Activated naive CD4-positive, alpha-beta T cell treated with anti-CD3 and anti-CD28 coated beads for 36 hours (primary cell): ENCODE measurements at regions of chr16 and their contacts with region 1.

Region 1: GRCh38 chr16:11742539-11743307 is at the start of gene TXNDC11:
- DNase-seq: peak; percentile 99
- H3K4me3 Mint-ChIP-seq: peak within 1 kb of the TSS; percentile 91
- H3K27ac Mint-ChIP-seq: peak within 1 kb of the TSS; percentile 96
- H3K4me1 Mint-ChIP-seq: peaks cover 48% of the 10 kb centered on the region
- H3K27me3 Mint-ChIP-seq: no peaks in the 10 kb centered on the region
- total RNA-seq, gene TXNDC11: 24.6 to 25.5 TPM

Region 2: GRCh38 chr16:11667824-11668622 is 74.7 kb before region 1 on chr16 and contains the start of gene SNN:
- CTCF ChIA-PET with region 1: interaction called, 3 read pairs
- intact Hi-C with region 1: loop called (anchors 2 kb)
- DNase-seq: peak; percentile 89
- H3K4me3 Mint-ChIP-seq: peak within 1 kb of the TSS; percentile 72
- H3K27ac Mint-ChIP-seq: no peak within 1 kb of the TSS
- H3K4me1 Mint-ChIP-seq: peaks cover 71% of the 10 kb centered on the region
- H3K27me3 Mint-ChIP-seq: no peaks in the 10 kb centered on the region
- total RNA-seq, gene SNN: 12.0 to 13.6 TPM

Region 3: GRCh38 chr16:11698271-11698689 is 44.4 kb before region 1 on chr16:
- CTCF ChIA-PET with region 1: interaction called, 5 read pairs
- intact Hi-C with region 1: loop called (anchors 1 kb)
- DNase-seq: peak; percentile 75
- H3K4me3 Mint-ChIP-seq: no peak overlapping the region
- H3K27ac Mint-ChIP-seq: peak overlapping the region; percentile 15
- H3K4me1 Mint-ChIP-seq: peaks cover 39% of the 10 kb centered on the region
- H3K27me3 Mint-ChIP-seq: no peaks in the 10 kb centered on the region

Region 4: GRCh38 chr16:11806721-11807120 is 64.0 kb after region 1 on chr16:
- CTCF ChIA-PET with region 1: no interaction called
- intact Hi-C with region 1: loop called (anchors 1 kb)
- DNase-seq: no peak
- H3K4me3 Mint-ChIP-seq: no peak overlapping the region
- H3K27ac Mint-ChIP-seq: no peak overlapping the region
- H3K4me1 Mint-ChIP-seq: peaks cover 10% of the 10 kb centered on the region
- H3K27me3 Mint-ChIP-seq: no peaks in the 10 kb centered on the region

Region 5: DNA sequence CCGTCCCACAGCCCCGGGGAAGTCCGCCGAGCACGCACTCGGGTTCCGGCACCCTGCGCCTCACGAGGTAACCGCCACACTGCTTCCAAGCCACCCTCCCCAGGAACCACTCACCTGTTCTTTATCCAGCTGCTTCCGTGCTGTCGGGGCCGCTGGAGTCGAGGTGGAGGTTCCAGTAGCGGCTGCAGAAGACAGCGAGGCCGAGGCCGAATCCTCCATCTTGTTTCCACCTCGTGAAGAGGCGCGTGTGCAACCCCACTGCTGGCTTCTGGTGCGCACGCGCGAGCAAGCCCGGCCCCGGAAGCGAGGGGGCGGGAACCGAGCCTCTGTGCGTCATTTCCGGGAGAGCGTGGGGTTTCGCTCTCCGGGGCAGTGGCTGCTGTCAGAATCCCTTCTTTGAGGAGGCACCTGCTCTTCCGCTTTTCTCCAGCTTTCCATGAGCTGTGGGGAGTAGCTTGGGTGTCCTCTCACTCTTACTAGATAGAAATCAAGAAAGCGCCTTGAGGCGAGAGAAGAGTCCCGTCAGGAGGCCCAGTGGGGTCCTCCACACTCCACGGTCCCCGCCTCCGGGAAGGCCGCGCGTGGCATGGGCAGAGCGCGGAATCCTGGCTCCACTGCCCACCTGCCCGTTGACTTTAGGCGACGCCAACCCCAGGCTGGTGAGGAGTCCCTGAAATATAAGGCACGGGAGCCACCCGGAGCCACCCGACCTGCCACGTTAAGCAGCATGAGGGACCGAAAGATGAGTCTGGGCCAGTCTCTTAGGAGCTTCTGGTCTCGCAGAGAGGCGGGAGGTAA is 108.8 kb after region 1 on chr16 and contains the start of gene RSL1D1:
- CTCF ChIA-PET with region 1: no interaction called
- intact Hi-C with region 1: loop called (anchors 1 kb)
- DNase-seq: peak; percentile 93
- H3K4me3 Mint-ChIP-seq: peak within 1 kb of the TSS; percentile 98
- H3K27ac Mint-ChIP-seq: peak within 1 kb of the TSS; percentile 90
- H3K4me1 Mint-ChIP-seq: peaks cover 61% of the 10 kb centered on the region
- H3K27me3 Mint-ChIP-seq: no peaks in the 10 kb centered on the region
- total RNA-seq, gene RSL1D1: 354 to 365 TPM